ENCODE measurements at regions of chr2 and their contacts with region 1.

Region 1: GRCh38 chr2:157789933-157790511 is 86.1 kb downstream of the ACVR1 start:
- DNase-seq: no peak
- H3K4me3 ChIP-seq: no peak overlapping the region
- H3K27ac ChIP-seq: peak overlapping the region; percentile 40
- H3K4me1 ChIP-seq: peaks cover 64% of the 10 kb centered on the region
- H3K27me3 ChIP-seq: no peaks in the 10 kb centered on the region
- CTCF ChIP-seq: no peak
- POLR2A ChIP-seq: no peak

Region 2: GRCh38 chr2:157876066-157876787 is 86.2 kb after region 1 on chr2 and contains the start of gene ACVR1:
- intact Hi-C with region 1: loop called (anchors 5 kb)
- DNase-seq: peak in 1 of 2 donors; percentile 97
- H3K4me3 ChIP-seq: peak within 1 kb of the TSS; percentile 69 to 80
- H3K27ac ChIP-seq: peak within 1 kb of the TSS; percentile 95
- H3K4me1 ChIP-seq: peaks cover 56% of the 10 kb centered on the region
- H3K27me3 ChIP-seq: no peaks in the 10 kb centered on the region
- CTCF ChIP-seq: peak in 1 of 3 experiments; percentile 1
- POLR2A ChIP-seq: peak in 1 of 2 donors; percentile 73
- total RNA-seq, gene ACVR1: 25.8 TPM

Region 3: DNA sequence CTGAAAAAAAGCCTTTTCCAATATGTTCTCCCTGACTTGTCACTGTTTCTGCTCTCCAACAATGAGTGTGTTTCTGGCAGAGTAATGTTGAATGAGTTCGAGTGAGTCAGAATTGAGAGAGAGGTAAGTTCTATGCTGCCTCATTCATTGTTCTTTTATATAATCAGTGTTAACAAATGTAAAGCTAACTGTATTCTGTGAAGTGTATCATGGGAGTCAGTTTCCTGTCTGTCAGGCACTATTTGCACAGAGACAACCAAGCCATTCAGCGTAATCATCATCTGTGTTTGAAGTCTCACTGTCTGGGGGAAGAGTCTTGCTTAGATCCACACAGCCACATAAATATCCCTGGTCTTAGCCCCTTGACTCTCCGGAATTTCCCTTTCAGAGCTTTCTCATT is 289.6 kb after region 1 on chr2:
- intact Hi-C with region 1: no loop called
- DNase-seq: no peak
- H3K4me3 ChIP-seq: no peak overlapping the region
- H3K27ac ChIP-seq: no peak overlapping the region
- H3K4me1 ChIP-seq: no peaks in the 10 kb centered on the region
- H3K27me3 ChIP-seq: no peaks in the 10 kb centered on the region
- CTCF ChIP-seq: no peak
- POLR2A ChIP-seq: no peak